ENCODE measurements at regions of chr1 and their contacts with region 1.

Region 1: DNA sequence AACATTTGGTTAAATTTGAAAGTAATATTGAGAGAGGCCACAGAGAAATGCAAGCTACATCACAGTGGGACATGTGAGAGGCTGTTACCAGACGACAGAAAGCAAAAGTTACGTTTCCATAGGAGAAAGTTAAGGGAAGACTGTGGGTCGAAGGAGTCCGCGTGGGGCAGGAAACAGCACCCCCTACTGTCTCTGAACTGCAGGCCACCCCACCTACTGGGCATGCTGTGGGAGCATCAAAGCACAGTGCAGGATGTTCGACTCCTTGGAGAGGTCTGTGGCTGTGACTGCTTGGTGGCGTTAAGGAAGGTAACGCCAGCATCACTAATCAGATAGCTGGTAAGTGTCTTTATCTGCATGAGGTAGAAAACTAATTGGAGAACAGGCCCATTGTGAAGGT is 123.9 kb downstream of the PTBP2 start:
- DNase-seq: peak; percentile 15
- ATAC-seq: peak; percentile 95
- H3K4me3 ChIP-seq: no peak overlapping the region
- H3K27ac ChIP-seq: no peak overlapping the region
- H3K4me1 ChIP-seq: no peaks in the 10 kb centered on the region
- H3K27me3 ChIP-seq: no peaks in the 10 kb centered on the region
- CTCF ChIP-seq: peak; percentile 54 to 83 (median 74); a peak in 5 of 6 replicates
- POLR2A ChIP-seq: no peak
- RAD21 ChIP-seq: peak; percentile 72

Region 2: GRCh38 chr1:95309031-95309471 is 1536.4 kb before region 1 on chr1:
- CTCF ChIA-PET with region 1: no interaction called
- POLR2A ChIA-PET with region 1: no interaction called
- RAD21 ChIA-PET with region 1: no interaction called
- intact Hi-C with region 1: loop called (anchors 10 kb)
- DNase-seq: peak; percentile 42
- ATAC-seq: peak; percentile 85
- H3K4me3 ChIP-seq: no peak overlapping the region
- H3K27ac ChIP-seq: no peak overlapping the region
- H3K4me1 ChIP-seq: peaks cover 0 to 4% of the 10 kb centered on the region in 2 experiments; a peak in 1 of 4 replicates
- H3K27me3 ChIP-seq: no peaks in the 10 kb centered on the region
- CTCF ChIP-seq: peak; percentile 47 to 79 (median 69); a peak in 5 of 6 replicates
- POLR2A ChIP-seq: no peak
- RAD21 ChIP-seq: peak; percentile 76

Region 3: DNA sequence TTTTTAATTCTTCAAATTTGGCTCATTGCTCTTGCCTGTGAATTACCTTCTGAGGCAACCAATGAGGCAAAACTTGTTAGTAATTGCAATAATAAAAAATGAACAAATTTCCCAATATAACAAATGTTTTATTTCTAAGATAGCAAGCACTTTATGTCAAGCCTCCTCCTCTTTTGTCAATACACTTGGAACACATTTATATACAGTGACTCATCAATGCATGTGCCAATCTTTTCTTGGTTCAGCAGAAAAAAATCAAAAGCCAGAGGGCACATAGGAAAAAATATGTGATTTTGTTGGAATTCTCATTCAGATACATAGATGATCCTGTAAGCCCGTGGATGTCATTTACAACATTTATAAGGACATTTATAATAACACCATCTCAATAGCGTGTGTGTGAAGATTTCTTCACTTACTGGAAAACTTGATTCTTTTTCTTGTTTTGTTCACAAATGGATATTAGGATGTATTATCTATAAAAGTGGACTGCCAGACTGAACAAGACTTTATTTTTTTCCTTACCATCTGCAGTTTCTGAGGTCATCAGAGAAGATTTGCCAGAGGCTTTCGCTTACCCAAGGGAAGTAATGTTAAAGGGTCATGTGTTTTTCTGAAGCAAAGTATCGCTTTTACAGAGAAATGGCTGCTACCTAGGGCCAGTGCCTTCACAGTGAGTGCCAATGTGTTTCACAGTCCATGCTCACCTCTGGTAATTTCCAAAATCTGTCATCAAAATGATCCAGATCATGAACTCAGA is 769.6 kb before region 1 on chr1:
- CTCF ChIA-PET with region 1: no interaction called
- POLR2A ChIA-PET with region 1: no interaction called
- RAD21 ChIA-PET with region 1: no interaction called
- intact Hi-C with region 1: loop called (anchors 5 kb)
- DNase-seq: no peak
- ATAC-seq: no peak
- H3K4me3 ChIP-seq: no peak overlapping the region
- H3K27ac ChIP-seq: no peak overlapping the region
- H3K4me1 ChIP-seq: no peaks in the 10 kb centered on the region
- H3K27me3 ChIP-seq: no peaks in the 10 kb centered on the region
- CTCF ChIP-seq: no peak
- POLR2A ChIP-seq: no peak
- RAD21 ChIP-seq: no peak

Region 4: GRCh38 chr1:96236156-96236739 is 609.2 kb before region 1 on chr1:
- CTCF ChIA-PET with region 1: no interaction called
- POLR2A ChIA-PET with region 1: interaction called, 4 read pairs
- RAD21 ChIA-PET with region 1: no interaction called
- intact Hi-C with region 1: loop called (anchors 2 kb)
- DNase-seq: peak; percentile 43
- ATAC-seq: peak; percentile 59; the same call in 1 of the 2 replicates
- H3K4me3 ChIP-seq: no peak overlapping the region
- H3K27ac ChIP-seq: no peak overlapping the region
- H3K4me1 ChIP-seq: peaks cover 12 to 13% of the 10 kb centered on the region in 2 experiments; a peak in 3 of 4 replicates
- H3K27me3 ChIP-seq: no peaks in the 10 kb centered on the region
- CTCF ChIP-seq: peak; percentile 41 to 63 (median 52); a peak in 5 of 6 replicates
- POLR2A ChIP-seq: no peak
- RAD21 ChIP-seq: peak; percentile 75

Region 5: DNA sequence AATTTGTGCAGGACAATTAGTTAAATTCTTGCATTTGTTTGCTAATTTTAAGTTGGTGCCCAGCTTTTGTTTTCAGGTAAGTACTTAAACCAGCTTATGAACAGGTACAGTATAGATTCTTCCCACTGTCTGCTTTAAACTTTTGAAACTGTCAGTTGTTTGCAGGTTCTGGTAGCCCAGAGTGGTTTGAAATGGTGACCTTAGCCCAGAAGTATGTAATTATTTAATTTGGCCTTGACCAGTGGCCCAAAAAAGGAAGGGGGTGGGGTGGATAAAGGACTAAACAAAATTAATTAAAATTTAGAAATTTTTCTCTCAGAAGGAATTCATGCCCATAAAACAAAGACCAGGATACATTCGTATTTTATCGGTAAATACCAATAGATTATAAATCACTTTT is 54.9 kb before region 1 on chr1:
- CTCF ChIA-PET with region 1: no interaction called
- POLR2A ChIA-PET with region 1: no interaction called
- RAD21 ChIA-PET with region 1: no interaction called
- intact Hi-C with region 1: no loop called
- DNase-seq: no peak
- ATAC-seq: no peak
- H3K4me3 ChIP-seq: no peak overlapping the region
- H3K27ac ChIP-seq: no peak overlapping the region
- H3K4me1 ChIP-seq: no peaks in the 10 kb centered on the region
- H3K27me3 ChIP-seq: no peaks in the 10 kb centered on the region
- CTCF ChIP-seq: no peak
- POLR2A ChIP-seq: no peak
- RAD21 ChIP-seq: no peak

Region 6: GRCh38 chr1:96966536-96967138 is 121.2 kb after region 1 on chr1:
- CTCF ChIA-PET with region 1: no interaction called
- POLR2A ChIA-PET with region 1: no interaction called
- RAD21 ChIA-PET with region 1: no interaction called
- intact Hi-C with region 1: no loop called
- DNase-seq: peak; percentile 59
- ATAC-seq: peak; percentile 94
- H3K4me3 ChIP-seq: no peak overlapping the region
- H3K27ac ChIP-seq: no peak overlapping the region
- H3K4me1 ChIP-seq: no peaks in the 10 kb centered on the region
- H3K27me3 ChIP-seq: no peaks in the 10 kb centered on the region
- CTCF ChIP-seq: peak; percentile 40 to 90 (median 72); a peak in 5 of 6 replicates
- POLR2A ChIP-seq: no peak
- RAD21 ChIP-seq: peak; percentile 73

Measured in HCT116 (cell line).